Esophagus squamous epithelium (tissue), 5 donors: ENCODE measurements at regions of chr1 and their contacts with region 1.

Region 1: GRCh38 chr1:205919026-205919746 is 24.1 kb downstream of the SLC26A9 start:
- DNase-seq: no peak
- H3K4me3 ChIP-seq: no peak overlapping the region
- H3K27ac ChIP-seq: no peak overlapping the region
- H3K4me1 ChIP-seq: peaks cover 0 to 19% (median 0%) of the 10 kb centered on the region in 3 donors
- H3K27me3 ChIP-seq: peaks cover 0 to 25% (median 0%) of the 10 kb centered on the region in 4 donors
- CTCF ChIP-seq: peak; percentile 76 to 95 (median 92)
- POLR2A ChIP-seq: no peak

Region 2: DNA sequence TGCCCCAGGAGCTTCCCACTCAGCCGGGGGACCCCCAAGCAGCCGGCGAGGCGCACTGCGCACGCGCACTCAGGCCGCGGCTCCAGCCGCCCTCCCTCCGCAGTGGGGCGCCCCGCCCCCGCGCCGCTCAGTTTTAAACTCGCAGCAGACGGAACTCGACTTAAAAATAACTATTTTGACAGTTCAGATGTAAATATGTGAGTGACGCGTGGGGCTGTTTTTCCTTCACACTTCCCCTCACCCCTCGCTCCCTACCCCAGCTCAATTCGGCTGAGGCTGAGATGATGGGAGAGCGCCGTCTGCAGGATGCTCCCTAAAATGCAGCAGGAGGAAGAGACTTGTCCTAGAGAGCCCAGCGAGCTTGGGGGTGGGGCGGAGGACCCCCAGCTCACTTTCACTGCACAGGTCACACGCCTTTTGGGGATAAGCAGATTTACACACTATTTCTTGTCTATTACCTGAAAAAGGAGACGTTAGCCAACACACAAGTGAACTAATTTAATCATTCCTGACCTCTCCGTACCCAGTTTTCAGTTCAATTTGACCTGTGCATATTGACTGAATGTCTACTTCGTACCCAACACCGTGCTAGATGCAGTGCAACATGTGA is 488.4 kb before region 1 on chr1:
- intact Hi-C with region 1: no loop called
- DNase-seq: no peak
- H3K4me3 ChIP-seq: peak overlapping the region; percentile 20 to 75 (median 41)
- H3K27ac ChIP-seq: no peak overlapping the region
- H3K4me1 ChIP-seq: peaks cover 0 to 11% (median 10%) of the 10 kb centered on the region in 3 donors
- H3K27me3 ChIP-seq: peaks cover 0 to 57% (median 0%) of the 10 kb centered on the region in 4 donors
- CTCF ChIP-seq: peak; percentile 53 to 82 (median 72)
- POLR2A ChIP-seq: no peak

Region 3: DNA sequence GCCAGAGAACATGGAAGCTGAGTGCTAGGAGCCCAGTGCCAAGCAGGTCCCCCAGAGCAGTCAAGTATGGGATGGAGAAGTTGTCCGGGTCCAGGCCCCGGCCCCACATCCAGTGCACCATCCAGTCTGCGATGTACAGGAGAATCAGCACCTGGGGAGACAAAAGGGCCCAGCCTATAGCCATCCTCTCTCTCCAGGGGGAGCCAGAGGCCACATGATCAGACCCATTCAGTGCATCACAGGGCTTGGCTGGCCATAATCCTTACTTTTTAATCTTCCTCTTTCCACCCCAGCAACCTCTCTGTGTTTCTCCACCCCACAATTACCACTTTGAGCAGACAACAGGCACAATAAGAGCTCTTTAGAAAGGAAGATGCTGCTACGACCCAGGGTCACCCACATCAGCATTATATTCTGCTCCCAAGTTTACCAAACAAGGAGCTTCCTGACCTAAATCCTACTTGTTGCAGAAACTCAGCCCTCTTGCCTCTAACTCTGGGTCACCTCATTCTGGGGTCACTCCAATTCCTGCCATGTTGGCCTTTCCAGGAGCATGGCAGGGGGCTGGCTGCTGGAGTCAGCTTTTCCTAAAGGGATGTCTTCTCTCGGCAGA is 127.5 kb before region 1 on chr1:
- intact Hi-C with region 1: loop called (anchors 10 kb)
- DNase-seq: no peak
- H3K4me3 ChIP-seq: no peak overlapping the region
- H3K27ac ChIP-seq: no peak overlapping the region
- H3K4me1 ChIP-seq: no peaks in the 10 kb centered on the region
- H3K27me3 ChIP-seq: no peaks in the 10 kb centered on the region
- CTCF ChIP-seq: peak; percentile 40 to 81 (median 68)
- POLR2A ChIP-seq: no peak

Region 4: GRCh38 chr1:205963352-205964155 is 44.4 kb after region 1 on chr1:
- intact Hi-C with region 1: no loop called
- DNase-seq: no peak
- H3K4me3 ChIP-seq: no peak overlapping the region
- H3K27ac ChIP-seq: no peak overlapping the region
- H3K4me1 ChIP-seq: peaks cover 0 to 12% (median 6%) of the 10 kb centered on the region in 3 donors
- H3K27me3 ChIP-seq: peaks cover 0 to 65% (median 0%) of the 10 kb centered on the region in 4 donors
- CTCF ChIP-seq: no peak
- POLR2A ChIP-seq: no peak

Region 5: GRCh38 chr1:205977402-205978014 is 58.3 kb after region 1 on chr1:
- intact Hi-C with region 1: loop called (anchors 2 kb)
- DNase-seq: no peak
- H3K4me3 ChIP-seq: no peak overlapping the region
- H3K27ac ChIP-seq: no peak overlapping the region
- H3K4me1 ChIP-seq: peaks cover 7 to 21% (median 14%) of the 10 kb centered on the region in 3 donors
- H3K27me3 ChIP-seq: peaks cover 0 to 7% (median 0%) of the 10 kb centered on the region in 4 donors
- CTCF ChIP-seq: peak; percentile 80 to 96 (median 93)
- POLR2A ChIP-seq: no peak

Region 6: GRCh38 chr1:206066479-206067171 is 147.4 kb after region 1 on chr1:
- intact Hi-C with region 1: no loop called
- DNase-seq: no peak
- H3K4me3 ChIP-seq: no peak overlapping the region
- H3K27ac ChIP-seq: no peak overlapping the region
- H3K4me1 ChIP-seq: no peaks in the 10 kb centered on the region
- H3K27me3 ChIP-seq: peaks cover 0 to 10% (median 0%) of the 10 kb centered on the region in 4 donors
- CTCF ChIP-seq: no peak
- POLR2A ChIP-seq: no peak

Region 7: GRCh38 chr1:206106328-206107167 is 187.4 kb after region 1 on chr1:
- intact Hi-C with region 1: loop called (anchors 5 kb)
- DNase-seq: no peak
- H3K4me3 ChIP-seq: no peak overlapping the region
- H3K27ac ChIP-seq: peak overlapping the region in 1 of 4 donors; percentile 27
- H3K4me1 ChIP-seq: peaks cover 0 to 16% (median 0%) of the 10 kb centered on the region in 3 donors
- H3K27me3 ChIP-seq: peaks cover 0 to 25% (median 0%) of the 10 kb centered on the region in 4 donors
- CTCF ChIP-seq: peak; percentile 74 to 92 (median 86)
- POLR2A ChIP-seq: no peak